ENCODE measurements at regions of chr9 and their contacts with region 1.

Region 1: DNA sequence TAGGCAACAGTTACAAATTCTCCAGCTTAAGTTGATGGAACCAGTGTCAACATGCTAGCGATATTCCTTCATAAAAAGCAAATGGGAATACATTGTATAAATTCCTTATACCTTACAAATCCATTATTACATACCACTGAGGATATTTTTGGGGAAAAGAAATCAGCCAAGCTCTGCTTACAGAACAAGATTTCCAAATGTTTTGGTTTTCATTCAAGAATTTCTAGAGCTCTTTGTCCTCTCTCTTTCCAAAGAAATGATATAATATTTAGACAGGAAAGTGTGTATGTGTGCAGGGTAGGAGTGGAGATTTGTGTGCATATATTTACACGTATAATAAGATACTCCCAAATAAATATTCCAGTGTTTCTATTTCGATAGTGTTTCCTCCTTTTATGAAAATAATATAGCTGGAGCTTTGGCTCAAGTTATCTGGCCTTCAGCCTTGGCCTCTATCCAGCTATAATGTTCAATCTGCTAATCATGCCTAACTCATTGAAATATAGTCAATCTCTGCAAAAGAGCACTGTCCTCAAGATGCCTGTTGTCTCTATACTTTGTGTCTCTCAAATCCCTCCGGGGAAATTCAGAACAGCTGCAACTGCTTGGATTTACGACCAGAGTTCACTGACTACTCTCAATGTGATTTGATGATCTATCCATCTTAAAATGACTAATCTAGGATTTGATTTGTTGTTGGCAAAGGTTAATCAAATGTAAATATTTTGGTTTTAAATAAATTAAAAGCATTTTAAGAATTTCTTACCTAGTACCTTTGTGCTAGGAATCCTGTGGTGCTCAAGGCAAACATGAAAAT is 41.1 kb downstream of the SVEP1 start:
- DNase-seq: peak; percentile 44
- ATAC-seq: no peak; the same call in 1 of the 2 replicates
- H3K4me3 ChIP-seq: no peak overlapping the region
- H3K27ac ChIP-seq: peak overlapping the region; percentile 22
- H3K4me1 ChIP-seq: peaks cover 19% of the 10 kb centered on the region
- H3K27me3 ChIP-seq: no peaks in the 10 kb centered on the region
- CTCF ChIP-seq: no peak

Region 2: GRCh38 chr9:110950041-110950645 is 411.7 kb after region 1 on chr9:
- CTCF ChIA-PET with region 1: no interaction called
- POLR2A ChIA-PET with region 1: interaction called, 15 read pairs
- intact Hi-C with region 1: no loop called
- DNase-seq: peak; percentile 44
- ATAC-seq: peak; percentile 47
- H3K4me3 ChIP-seq: no peak overlapping the region
- H3K27ac ChIP-seq: peak overlapping the region; percentile 65
- H3K4me1 ChIP-seq: peaks cover 52% of the 10 kb centered on the region
- H3K27me3 ChIP-seq: no peaks in the 10 kb centered on the region
- CTCF ChIP-seq: no peak